Mammary epithelial cell (primary cell): ENCODE measurements at regions of chr13 and their contacts with region 1.

Region 1: GRCh38 chr13:97030705-97031452 is 36.6 kb upstream of the OXGR1 start:
- DNase-seq: peak; percentile 30
- H3K4me3 ChIP-seq: no peak overlapping the region
- H3K27ac ChIP-seq: no peak overlapping the region
- H3K4me1 ChIP-seq: no peaks in the 10 kb centered on the region
- H3K27me3 ChIP-seq: peaks cover 3% of the 10 kb centered on the region
- CTCF ChIP-seq: peak; percentile 41 to 48

Region 2: GRCh38 chr13:96822895-96823294 is 208.0 kb before region 1 on chr13:
- CTCF ChIA-PET with region 1: no interaction called
- dilution Hi-C with region 1: no loop called
- in situ Hi-C with region 1: no loop called
- intact Hi-C with region 1: loop called (anchors 1 kb)
- DNase-seq: peak; percentile 21
- H3K4me3 ChIP-seq: no peak overlapping the region
- H3K27ac ChIP-seq: no peak overlapping the region
- H3K4me1 ChIP-seq: no peaks in the 10 kb centered on the region
- H3K27me3 ChIP-seq: no peaks in the 10 kb centered on the region
- CTCF ChIP-seq: peak; percentile 40 to 77

Region 3: DNA sequence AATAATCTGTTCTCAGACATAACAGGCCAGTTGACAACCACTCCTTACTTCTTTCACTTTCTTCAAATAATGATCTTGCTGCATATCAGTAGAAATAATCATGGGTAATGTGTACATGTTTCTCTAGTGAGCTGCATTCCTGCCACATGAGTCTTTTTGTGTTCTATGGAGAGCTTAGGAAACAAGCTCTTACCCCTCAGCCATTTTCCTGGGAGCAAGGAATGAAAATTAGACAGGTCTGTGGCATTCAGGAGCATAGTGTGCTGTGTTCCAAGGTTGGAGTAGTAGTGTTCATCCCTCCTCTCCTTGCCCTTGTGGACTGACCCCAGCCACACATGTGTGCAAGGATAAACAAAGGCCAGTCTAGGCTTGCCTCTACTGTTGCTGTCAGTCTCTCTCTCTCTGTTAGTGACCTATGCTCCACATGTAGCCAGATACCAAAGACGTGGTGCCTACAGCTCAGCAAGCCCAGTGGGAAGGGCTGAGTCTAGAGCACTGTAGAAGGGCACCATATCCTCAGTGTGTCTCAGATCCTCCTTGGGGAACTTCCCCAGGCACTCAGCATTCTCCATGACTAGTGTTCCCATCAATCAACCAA is 25.1 kb before region 1 on chr13:
- CTCF ChIA-PET with region 1: no interaction called
- dilution Hi-C with region 1: no loop called
- in situ Hi-C with region 1: no loop called
- intact Hi-C with region 1: no loop called
- DNase-seq: peak; percentile 42
- H3K4me3 ChIP-seq: no peak overlapping the region
- H3K27ac ChIP-seq: no peak overlapping the region
- H3K4me1 ChIP-seq: peaks cover 10% of the 10 kb centered on the region
- H3K27me3 ChIP-seq: no peaks in the 10 kb centered on the region
- CTCF ChIP-seq: no peak

Region 4: GRCh38 chr13:97018029-97018831 is 12.6 kb before region 1 on chr13:
- CTCF ChIA-PET with region 1: no interaction called
- dilution Hi-C with region 1: no loop called
- in situ Hi-C with region 1: no loop called
- intact Hi-C with region 1: loop called (anchors 1 kb)
- DNase-seq: peak; percentile 39
- H3K4me3 ChIP-seq: no peak overlapping the region
- H3K27ac ChIP-seq: no peak overlapping the region
- H3K4me1 ChIP-seq: no peaks in the 10 kb centered on the region
- H3K27me3 ChIP-seq: peaks cover 3% of the 10 kb centered on the region
- CTCF ChIP-seq: peak; percentile 89 to 96

Region 5: DNA sequence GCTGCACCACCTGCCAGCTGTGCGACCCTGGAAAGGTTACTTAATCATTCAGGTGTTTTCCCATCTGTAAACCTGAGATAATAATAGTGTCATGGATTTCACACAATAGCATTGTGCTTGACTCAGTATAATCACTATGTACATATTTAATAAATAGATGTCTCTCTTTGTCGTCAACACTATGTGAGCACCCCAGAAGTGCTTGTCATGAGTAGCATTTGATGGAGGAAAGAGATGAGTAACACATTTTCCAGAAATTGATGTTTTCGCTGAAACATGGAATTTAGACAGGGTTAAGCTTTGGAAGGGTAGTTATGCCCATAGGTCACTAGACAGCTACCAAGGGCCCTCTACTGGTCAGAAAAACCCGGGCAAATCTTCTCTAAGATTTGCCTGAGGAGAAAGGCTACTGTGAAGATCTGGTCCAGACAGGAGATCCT is 181.7 kb after region 1 on chr13:
- CTCF ChIA-PET with region 1: no interaction called
- dilution Hi-C with region 1: no loop called
- in situ Hi-C with region 1: no loop called
- intact Hi-C with region 1: loop called (anchors 1 kb)
- DNase-seq: peak; percentile 67
- H3K4me3 ChIP-seq: no peak overlapping the region
- H3K27ac ChIP-seq: no peak overlapping the region
- H3K4me1 ChIP-seq: peaks cover 24% of the 10 kb centered on the region
- H3K27me3 ChIP-seq: no peaks in the 10 kb centered on the region
- CTCF ChIP-seq: peak; percentile 70 to 85

Region 6: GRCh38 chr13:97429681-97430081 is 398.8 kb after region 1 on chr13:
- CTCF ChIA-PET with region 1: no interaction called
- dilution Hi-C with region 1: no loop called
- in situ Hi-C with region 1: no loop called
- intact Hi-C with region 1: no loop called
- DNase-seq: no peak
- H3K4me3 ChIP-seq: no peak overlapping the region
- H3K27ac ChIP-seq: no peak overlapping the region
- H3K4me1 ChIP-seq: peaks cover 5% of the 10 kb centered on the region
- H3K27me3 ChIP-seq: no peaks in the 10 kb centered on the region
- CTCF ChIP-seq: no peak